Ovary (tissue), 10 donors: ENCODE measurements at regions of chr2 and their contacts with region 1.

Region 1: GRCh38 chr2:152166633-152167032 is 8.9 kb downstream of the STAM2 start:
- DNase-seq: no peak
- H3K4me3 ChIP-seq: no peak overlapping the region
- H3K27ac ChIP-seq: peak overlapping the region in 1 of 2 donors; percentile 57
- H3K4me1 ChIP-seq: peaks cover 9% of the 10 kb centered on the region
- H3K27me3 ChIP-seq: no peaks in the 10 kb centered on the region
- CTCF ChIP-seq: no peak
- EP300 ChIP-seq: no peak
- POLR2A ChIP-seq: no peak

Region 2: DNA sequence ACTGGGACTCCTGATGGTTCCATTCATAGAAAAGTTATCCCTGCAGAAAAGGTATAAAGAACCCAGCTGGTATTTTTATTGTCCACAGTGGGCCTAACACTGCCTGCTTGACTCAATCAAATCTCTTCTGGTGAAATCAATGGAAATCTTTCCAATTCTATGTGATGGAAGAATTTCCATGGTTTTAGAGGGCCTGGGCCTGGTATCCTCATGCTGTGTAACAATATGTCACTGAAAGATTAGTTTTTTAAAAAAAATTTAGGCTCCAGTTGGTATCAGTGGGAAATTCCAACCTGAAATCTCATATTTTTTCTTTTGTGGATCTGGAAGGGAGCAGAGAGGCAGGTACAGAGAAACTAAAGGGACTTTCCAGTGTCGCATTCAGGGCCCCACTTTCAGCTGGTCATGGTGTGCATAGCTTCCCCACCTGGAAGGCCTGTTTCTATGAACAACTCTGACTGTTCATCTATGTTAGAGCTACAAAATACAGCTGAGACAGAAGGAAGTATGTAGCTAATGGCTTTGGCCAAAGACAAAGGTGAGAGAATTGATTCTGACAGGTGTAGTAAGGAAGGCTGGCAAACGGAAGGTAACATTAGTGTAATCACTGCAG is 453.2 kb before region 1 on chr2:
- intact Hi-C with region 1: no loop called
- DNase-seq: no peak
- H3K4me3 ChIP-seq: no peak overlapping the region
- H3K27ac ChIP-seq: no peak overlapping the region
- H3K4me1 ChIP-seq: no peaks in the 10 kb centered on the region
- H3K27me3 ChIP-seq: no peaks in the 10 kb centered on the region
- CTCF ChIP-seq: no peak
- EP300 ChIP-seq: no peak
- POLR2A ChIP-seq: no peak

Region 3: GRCh38 chr2:152047819-152048471 is 118.7 kb before region 1 on chr2:
- intact Hi-C with region 1: loop called in 1 of 4 experiments (anchors 10 kb)
- DNase-seq: no peak
- H3K4me3 ChIP-seq: no peak overlapping the region
- H3K27ac ChIP-seq: no peak overlapping the region
- H3K4me1 ChIP-seq: no peaks in the 10 kb centered on the region
- H3K27me3 ChIP-seq: no peaks in the 10 kb centered on the region
- CTCF ChIP-seq: no peak
- EP300 ChIP-seq: no peak
- POLR2A ChIP-seq: no peak

Region 4: GRCh38 chr2:152222975-152223637 is 56.5 kb after region 1 on chr2:
- intact Hi-C with region 1: no loop called
- DNase-seq: peak; percentile 54 to 66 (median 57)
- H3K4me3 ChIP-seq: no peak overlapping the region
- H3K27ac ChIP-seq: peak overlapping the region in 1 of 2 donors; percentile 55
- H3K4me1 ChIP-seq: peaks cover 6% of the 10 kb centered on the region
- H3K27me3 ChIP-seq: no peaks in the 10 kb centered on the region
- CTCF ChIP-seq: no peak
- EP300 ChIP-seq: no peak
- POLR2A ChIP-seq: no peak

Region 5: DNA sequence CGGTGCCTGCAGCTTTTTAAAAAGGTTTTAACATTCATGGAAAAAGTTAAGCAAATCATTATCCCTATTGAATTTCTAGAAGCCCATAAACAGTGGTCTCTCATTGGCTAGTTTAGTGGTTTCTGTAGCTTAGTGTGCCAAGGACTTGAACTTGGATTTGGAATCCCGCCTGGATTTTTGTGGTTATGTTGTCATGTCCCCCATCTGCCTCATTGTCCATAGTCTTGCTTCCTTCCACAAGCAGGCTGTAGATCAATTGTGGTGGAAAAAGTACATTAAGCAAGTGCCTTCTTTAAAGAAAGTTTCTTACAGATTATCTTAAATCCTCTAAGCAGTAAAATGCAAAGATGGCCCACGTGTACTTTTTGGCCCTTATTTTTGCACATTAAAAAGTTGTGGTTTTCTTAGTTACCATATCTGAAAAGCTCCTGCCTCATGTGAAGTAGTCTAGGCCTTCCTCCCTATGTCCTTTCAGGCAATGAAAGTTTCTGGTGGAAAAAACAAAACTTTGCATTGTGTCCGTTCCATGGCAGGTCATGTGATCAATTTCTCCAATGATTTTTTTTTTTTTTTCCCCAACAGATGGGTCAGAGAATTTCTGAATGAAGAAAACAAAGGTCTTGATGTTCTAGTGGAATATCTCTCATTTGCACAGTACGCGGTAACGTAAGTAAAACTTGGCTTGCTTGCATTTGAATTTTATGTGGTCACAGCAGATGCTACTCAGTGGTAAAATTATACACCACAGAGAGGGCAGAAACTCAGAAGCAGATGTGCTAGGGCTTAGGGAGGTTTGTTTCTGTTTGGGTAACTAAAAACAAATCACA is 391.7 kb after region 1 on chr2:
- intact Hi-C with region 1: no loop called
- DNase-seq: no peak
- H3K4me3 ChIP-seq: no peak overlapping the region
- H3K27ac ChIP-seq: no peak overlapping the region
- H3K4me1 ChIP-seq: no peaks in the 10 kb centered on the region
- H3K27me3 ChIP-seq: no peaks in the 10 kb centered on the region
- CTCF ChIP-seq: no peak
- EP300 ChIP-seq: no peak
- POLR2A ChIP-seq: no peak

Region 6: DNA sequence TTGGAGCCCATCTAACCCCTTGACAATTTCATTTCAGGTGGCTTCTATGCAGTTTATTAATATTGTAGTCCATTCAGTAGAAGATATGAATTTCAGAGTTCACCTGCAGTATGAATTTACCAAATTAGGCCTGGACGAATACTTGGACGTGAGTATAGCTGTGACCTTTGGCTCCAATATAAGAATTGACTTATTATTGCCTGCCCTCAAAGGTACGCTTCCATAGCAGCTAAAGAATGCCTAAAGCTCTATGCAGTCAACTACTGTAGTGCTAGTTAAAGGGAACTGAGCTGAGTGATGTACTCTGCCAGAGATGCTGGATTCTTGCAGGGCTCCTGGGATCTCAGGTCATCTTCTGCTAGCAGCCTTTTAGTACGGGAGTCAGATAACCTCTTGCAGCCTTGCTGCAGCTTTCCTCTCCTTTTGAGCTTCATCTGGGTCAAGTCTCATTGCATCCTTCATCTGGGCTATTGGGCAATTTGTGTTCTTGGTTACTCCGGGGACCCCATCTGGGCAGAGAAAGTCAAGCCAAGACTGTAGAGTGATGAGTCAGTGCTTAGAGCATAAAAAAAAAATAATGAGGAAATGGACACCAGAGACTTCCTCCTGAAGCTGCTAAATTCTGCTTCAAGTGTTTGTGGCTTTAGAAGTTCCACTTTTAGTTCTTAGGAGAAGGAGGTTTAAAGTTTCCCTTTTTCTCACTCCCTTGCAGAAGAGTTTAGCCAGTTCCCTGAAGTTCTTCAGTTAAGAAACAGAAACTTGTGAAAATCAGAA is 445.0 kb after region 1 on chr2:
- intact Hi-C with region 1: no loop called
- DNase-seq: peak in 2 of 5 donors; percentile 45 to 67
- H3K4me3 ChIP-seq: no peak overlapping the region
- H3K27ac ChIP-seq: no peak overlapping the region
- H3K4me1 ChIP-seq: peaks cover 6% of the 10 kb centered on the region
- H3K27me3 ChIP-seq: no peaks in the 10 kb centered on the region
- CTCF ChIP-seq: no peak
- EP300 ChIP-seq: no peak
- POLR2A ChIP-seq: no peak